ENCODE measurements at regions of chr3 and their contacts with region 1.

Region 1: GRCh38 chr3:28328188-28329151 is 20.1 kb upstream of the ZCWPW2 start:
- DNase-seq: peak in 2 of 3 donors; percentile 56 to 63
- H3K4me3 ChIP-seq: no peak overlapping the region
- H3K27ac ChIP-seq: no peak overlapping the region
- H3K4me1 ChIP-seq: no peaks in the 10 kb centered on the region
- H3K27me3 ChIP-seq: no peaks in the 10 kb centered on the region

Region 2: GRCh38 chr3:27712136-27713077 is 616.1 kb before region 1 on chr3:
- CTCF ChIA-PET with region 1: interaction called, 46 read pairs
- POLR2A ChIA-PET with region 1: no interaction called
- DNase-seq: peak; percentile 87 to 92 (median 89)
- H3K4me3 ChIP-seq: peak overlapping the region; percentile 40 to 88 (median 76)
- H3K27ac ChIP-seq: no peak overlapping the region
- H3K4me1 ChIP-seq: peaks cover 5 to 32% (median 27%) of the 10 kb centered on the region in 4 experiments
- H3K27me3 ChIP-seq: peaks cover 22 to 75% (median 53%) of the 10 kb centered on the region in 5 experiments

Region 3: GRCh38 chr3:27721717-27722542 is 606.5 kb before region 1 on chr3 and contains the start of gene EOMES:
- CTCF ChIA-PET with region 1: interaction called, 11 read pairs
- POLR2A ChIA-PET with region 1: no interaction called
- DNase-seq: peak; percentile 55 to 74 (median 65)
- H3K4me3 ChIP-seq: peak within 1 kb of the TSS; percentile 11 to 71 (median 63)
- H3K27ac ChIP-seq: no peak within 1 kb of the TSS
- H3K4me1 ChIP-seq: peaks cover 4 to 36% (median 30%) of the 10 kb centered on the region in 4 experiments
- H3K27me3 ChIP-seq: peaks cover 45 to 98% (median 72%) of the 10 kb centered on the region in 5 experiments

Region 4: GRCh38 chr3:28268989-28269388 is 59.5 kb before region 1 on chr3:
- CTCF ChIA-PET with region 1: no interaction called
- POLR2A ChIA-PET with region 1: no interaction called
- DNase-seq: peak in 2 of 3 donors; percentile 10 to 15
- H3K4me3 ChIP-seq: no peak overlapping the region
- H3K27ac ChIP-seq: no peak overlapping the region
- H3K4me1 ChIP-seq: no peaks in the 10 kb centered on the region
- H3K27me3 ChIP-seq: no peaks in the 10 kb centered on the region

Region 5: GRCh38 chr3:28317438-28318022 is 10.9 kb before region 1 on chr3:
- CTCF ChIA-PET with region 1: interaction called, 16 read pairs
- POLR2A ChIA-PET with region 1: no interaction called
- DNase-seq: peak; percentile 38 to 72 (median 63)
- H3K4me3 ChIP-seq: no peak overlapping the region
- H3K27ac ChIP-seq: no peak overlapping the region
- H3K4me1 ChIP-seq: no peaks in the 10 kb centered on the region
- H3K27me3 ChIP-seq: no peaks in the 10 kb centered on the region

Region 6: GRCh38 chr3:28502397-28502937 is 174.0 kb after region 1 on chr3:
- CTCF ChIA-PET with region 1: no interaction called
- POLR2A ChIA-PET with region 1: no interaction called
- DNase-seq: no peak
- H3K4me3 ChIP-seq: no peak overlapping the region
- H3K27ac ChIP-seq: no peak overlapping the region
- H3K4me1 ChIP-seq: no peaks in the 10 kb centered on the region
- H3K27me3 ChIP-seq: no peaks in the 10 kb centered on the region

Region 7: GRCh38 chr3:28808068-28808467 is 479.6 kb after region 1 on chr3:
- CTCF ChIA-PET with region 1: no interaction called
- POLR2A ChIA-PET with region 1: no interaction called
- DNase-seq: no peak
- H3K4me3 ChIP-seq: no peak overlapping the region
- H3K27ac ChIP-seq: no peak overlapping the region
- H3K4me1 ChIP-seq: no peaks in the 10 kb centered on the region
- H3K27me3 ChIP-seq: no peaks in the 10 kb centered on the region

Measured in common myeloid progenitor, CD34-positive (primary cell).